Colonic mucosa (tissue), 4 donors: ENCODE measurements at regions of chr1 and their contacts with region 1.

Region 1: GRCh38 chr1:202505356-202505755 is 156.9 kb downstream of the PPP1R12B start:
- DNase-seq: no peak
- H3K4me3 ChIP-seq: no peak overlapping the region
- H3K27ac ChIP-seq: peak overlapping the region; percentile 37
- H3K4me1 ChIP-seq: no peaks in the 10 kb centered on the region
- H3K27me3 ChIP-seq: no peaks in the 10 kb centered on the region
- CTCF ChIP-seq: no peak

Region 2: GRCh38 chr1:202561726-202562443 is 56.5 kb after region 1 on chr1:
- intact Hi-C with region 1: loop called (anchors 5 kb)
- DNase-seq: no peak
- H3K4me3 ChIP-seq: no peak overlapping the region
- H3K27ac ChIP-seq: no peak overlapping the region
- H3K4me1 ChIP-seq: no peaks in the 10 kb centered on the region
- H3K27me3 ChIP-seq: no peaks in the 10 kb centered on the region
- CTCF ChIP-seq: no peak